ENCODE measurements at regions of chr5 and their contacts with region 1.

Region 1: DNA sequence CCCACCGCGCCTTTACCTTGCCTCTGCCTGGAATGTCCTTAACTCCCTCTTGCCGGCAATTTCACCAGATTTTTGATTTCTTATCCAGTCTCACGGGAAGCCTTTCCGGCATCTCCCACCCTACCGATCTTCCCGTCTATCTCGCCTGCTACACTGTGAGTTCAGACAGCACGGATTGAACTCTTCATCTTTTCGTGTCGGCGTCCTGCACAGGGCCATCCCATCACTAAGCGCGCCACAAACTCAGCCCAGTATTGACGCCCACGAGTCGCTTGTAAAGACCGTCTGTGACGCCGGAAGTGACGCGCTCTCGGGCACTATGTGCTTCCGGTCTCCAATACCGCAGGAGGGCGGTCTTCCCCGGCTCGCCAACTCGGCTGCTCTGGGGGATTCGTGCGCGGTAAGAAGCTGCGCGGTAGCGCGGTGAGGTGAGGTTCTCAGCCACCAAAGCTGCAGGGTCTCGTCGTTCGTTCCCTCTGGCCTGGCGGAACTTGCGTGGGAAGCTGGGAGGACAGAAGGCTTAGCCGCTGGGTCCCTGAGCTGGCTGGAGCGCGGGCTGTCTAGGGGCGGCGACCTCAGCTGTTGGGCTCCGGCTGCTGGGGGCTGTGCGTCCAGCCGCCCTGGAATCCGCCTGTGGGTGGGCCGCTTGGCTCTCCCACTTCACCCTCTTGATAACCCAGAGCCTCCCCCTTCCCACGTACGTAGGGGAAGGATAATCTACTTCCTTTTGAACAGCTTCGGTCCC is at the start of gene ZCCHC9:
- DNase-seq: peak; percentile 96
- H3K4me3 Mint-ChIP-seq: peak within 1 kb of the TSS; percentile 92
- H3K27ac Mint-ChIP-seq: peak within 1 kb of the TSS; percentile 92
- H3K4me1 Mint-ChIP-seq: peaks cover 61% of the 10 kb centered on the region
- H3K27me3 Mint-ChIP-seq: no peaks in the 10 kb centered on the region
- total RNA-seq, gene ZCCHC9: 42.6 to 49.1 TPM

Region 2: GRCh38 chr5:80654391-80655230 is 646.8 kb before region 1 on chr5 and contains the starts of genes DHFR and MSH3:
- CTCF ChIA-PET with region 1: no interaction called
- POLR2A ChIA-PET with region 1: interaction called, 3 read pairs
- intact Hi-C with region 1: loop called (anchors 1 kb)
- DNase-seq: peak; percentile 95
- H3K4me3 Mint-ChIP-seq: peak within 1 kb of the TSS; percentile 82
- H3K27ac Mint-ChIP-seq: peak within 1 kb of the TSS; percentile 93
- H3K4me1 Mint-ChIP-seq: peaks cover 20% of the 10 kb centered on the region
- H3K27me3 Mint-ChIP-seq: no peaks in the 10 kb centered on the region
- total RNA-seq, gene DHFR: 108 to 110 TPM
- total RNA-seq, gene MSH3: 23.2 to 23.6 TPM

Region 3: DNA sequence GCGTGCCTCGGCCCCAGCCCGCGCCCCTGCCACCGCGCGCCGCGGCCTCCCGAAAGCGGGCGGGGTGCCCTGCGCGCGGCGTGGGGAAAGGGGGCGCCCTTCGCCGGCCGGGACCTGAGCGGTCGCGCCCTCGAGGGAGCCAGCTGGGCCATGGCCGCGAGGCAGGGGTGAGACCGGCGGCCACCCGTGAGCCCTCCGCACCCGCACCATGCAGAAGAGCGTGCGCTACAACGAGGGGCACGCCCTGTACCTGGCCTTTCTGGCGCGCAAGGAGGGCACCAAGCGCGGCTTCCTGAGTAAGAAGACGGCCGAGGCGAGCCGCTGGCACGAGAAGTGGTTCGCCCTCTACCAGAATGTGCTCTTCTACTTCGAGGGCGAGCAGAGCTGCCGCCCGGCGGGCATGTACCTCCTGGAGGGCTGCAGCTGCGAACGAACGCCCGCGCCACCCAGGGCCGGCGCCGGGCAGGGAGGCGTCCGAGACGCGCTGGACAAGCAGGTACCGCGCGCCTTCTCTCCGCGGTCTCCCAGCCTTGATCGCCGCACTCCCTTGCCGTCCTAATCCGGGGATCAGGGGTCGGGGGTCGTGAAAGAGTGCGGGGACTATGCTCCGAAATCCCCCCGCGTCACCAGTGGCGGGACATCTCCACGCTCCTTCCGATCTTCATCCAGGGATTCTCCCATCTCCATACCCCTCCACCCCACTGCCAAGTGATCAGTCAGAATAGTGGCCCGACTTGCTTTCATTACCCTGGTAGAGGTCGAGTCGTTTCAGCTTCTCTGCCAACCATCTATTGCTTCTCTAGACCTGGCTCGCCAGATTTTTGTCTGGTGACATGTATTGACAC is 340.7 kb before region 1 on chr5:
- CTCF ChIA-PET with region 1: interaction called, 4 read pairs
- POLR2A ChIA-PET with region 1: no interaction called
- intact Hi-C with region 1: loop called (anchors 5 kb)
- DNase-seq: peak; percentile 60
- H3K4me3 Mint-ChIP-seq: peak overlapping the region; percentile 81
- H3K27ac Mint-ChIP-seq: peak overlapping the region; percentile 56
- H3K4me1 Mint-ChIP-seq: peaks cover 55% of the 10 kb centered on the region
- H3K27me3 Mint-ChIP-seq: peaks cover 6% of the 10 kb centered on the region

Region 4: GRCh38 chr5:81177061-81177460 is 124.4 kb before region 1 on chr5:
- CTCF ChIA-PET with region 1: no interaction called
- POLR2A ChIA-PET with region 1: no interaction called
- intact Hi-C with region 1: no loop called
- DNase-seq: no peak
- H3K4me3 Mint-ChIP-seq: no peak overlapping the region
- H3K27ac Mint-ChIP-seq: no peak overlapping the region
- H3K4me1 Mint-ChIP-seq: no peaks in the 10 kb centered on the region
- H3K27me3 Mint-ChIP-seq: no peaks in the 10 kb centered on the region

Region 5: GRCh38 chr5:81288021-81288433 is 13.4 kb before region 1 on chr5:
- CTCF ChIA-PET with region 1: interaction called, 13 read pairs
- POLR2A ChIA-PET with region 1: interaction called, 9 read pairs
- intact Hi-C with region 1: loop called (anchors 1 kb)
- DNase-seq: no peak
- H3K4me3 Mint-ChIP-seq: no peak overlapping the region
- H3K27ac Mint-ChIP-seq: no peak overlapping the region
- H3K4me1 Mint-ChIP-seq: peaks cover 54% of the 10 kb centered on the region
- H3K27me3 Mint-ChIP-seq: no peaks in the 10 kb centered on the region

Region 6: DNA sequence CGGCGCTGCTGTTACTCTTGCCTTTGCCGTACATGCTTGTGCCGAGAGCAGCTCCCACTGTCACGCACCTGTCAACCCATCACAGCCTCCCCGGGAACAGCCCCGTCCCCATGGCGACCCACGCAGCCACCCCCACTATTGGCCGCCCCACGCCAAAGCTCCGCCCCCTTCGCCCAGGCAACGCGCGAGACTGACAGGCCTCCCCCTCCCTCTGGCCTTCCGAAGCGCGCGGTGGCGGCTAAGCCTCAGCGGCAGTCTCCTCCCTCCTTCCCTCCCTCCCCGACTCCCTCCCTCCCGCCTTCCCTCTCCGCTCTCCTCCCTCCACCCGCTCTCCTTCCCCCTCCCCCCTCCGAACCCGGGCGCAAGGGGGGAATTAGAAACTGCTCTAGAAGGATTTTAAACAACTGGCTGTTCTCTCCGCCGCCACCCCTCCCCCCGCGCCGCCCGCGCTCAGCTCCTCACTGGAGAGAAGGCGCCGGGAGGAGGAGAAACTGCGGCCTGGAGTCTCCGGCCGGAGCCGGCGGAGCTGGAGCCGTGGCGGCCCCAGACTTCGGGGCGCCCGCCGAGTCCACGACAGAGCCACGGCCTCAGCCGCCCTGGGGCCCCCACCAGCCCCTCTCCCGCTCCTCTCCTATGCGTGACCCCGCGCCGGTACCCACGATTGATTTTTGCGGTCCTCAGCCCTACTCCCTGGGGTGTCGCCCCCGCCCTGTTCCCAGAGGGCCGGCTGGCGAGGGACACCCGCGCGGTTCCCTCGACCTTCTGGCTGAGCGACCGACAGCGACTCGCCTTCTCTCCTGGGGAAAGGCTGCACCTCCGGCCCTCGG is 449.8 kb after region 1 on chr5 and contains the start of gene SSBP2:
- CTCF ChIA-PET with region 1: no interaction called
- POLR2A ChIA-PET with region 1: no interaction called
- intact Hi-C with region 1: loop called (anchors 2 kb)
- DNase-seq: peak; percentile 98
- H3K4me3 Mint-ChIP-seq: peak within 1 kb of the TSS; percentile 86
- H3K27ac Mint-ChIP-seq: peak within 1 kb of the TSS; percentile 74
- H3K4me1 Mint-ChIP-seq: peaks cover 22% of the 10 kb centered on the region
- H3K27me3 Mint-ChIP-seq: no peaks in the 10 kb centered on the region
- total RNA-seq, gene SSBP2: 13.0 to 14.2 TPM

Region 7: GRCh38 chr5:81971712-81972495 is 670.5 kb after region 1 on chr5 and contains the start of gene ATG10:
- CTCF ChIA-PET with region 1: no interaction called
- POLR2A ChIA-PET with region 1: no interaction called
- intact Hi-C with region 1: loop called (anchors 1 kb)
- DNase-seq: peak; percentile 91
- H3K4me3 Mint-ChIP-seq: peak within 1 kb of the TSS; percentile 87
- H3K27ac Mint-ChIP-seq: peak within 1 kb of the TSS; percentile 98
- H3K4me1 Mint-ChIP-seq: peaks cover 20% of the 10 kb centered on the region
- H3K27me3 Mint-ChIP-seq: no peaks in the 10 kb centered on the region
- total RNA-seq, gene ATG10: 8.5 to 9.7 TPM

Region 8: DNA sequence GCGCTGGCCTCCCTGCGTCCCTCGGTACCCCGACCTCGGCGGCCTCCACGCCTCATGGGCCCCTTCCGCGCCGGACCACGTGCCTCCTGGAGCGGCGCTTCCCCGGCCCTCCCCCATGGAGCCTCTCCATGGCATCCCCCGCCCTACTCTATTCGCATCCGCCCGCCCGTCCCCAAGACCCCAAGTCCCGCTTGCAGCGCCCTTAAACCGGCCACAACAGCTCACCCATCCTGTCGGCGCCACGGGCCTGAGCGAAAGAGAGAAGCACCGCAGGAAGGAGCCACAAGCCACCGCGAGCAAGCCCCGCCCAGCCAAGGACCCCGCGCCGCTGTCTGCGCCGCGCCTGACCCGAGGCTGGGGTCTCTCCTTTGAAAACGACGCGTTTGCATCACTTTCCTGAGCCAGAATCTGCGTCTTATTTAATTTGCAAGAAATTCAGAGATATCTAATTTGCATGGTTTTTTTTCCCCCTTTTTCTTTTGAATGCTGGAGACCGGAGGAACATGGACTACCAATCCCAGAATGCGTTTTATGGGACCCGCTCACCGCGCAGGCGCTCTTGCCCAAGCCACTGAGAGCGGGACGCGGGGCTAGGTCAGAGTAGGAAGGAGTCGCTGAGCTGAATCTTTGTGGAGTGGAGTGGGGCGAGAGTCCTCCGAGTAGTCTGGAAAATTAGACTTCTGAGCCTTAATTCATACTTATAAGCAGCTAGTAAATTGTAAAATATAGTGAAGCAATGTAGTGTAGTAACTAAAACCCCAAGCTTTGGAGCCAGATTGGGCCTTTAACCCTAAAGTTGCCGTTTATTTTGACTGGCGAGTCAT is 976.9 kb after region 1 on chr5 and contains the start of gene RPS23:
- CTCF ChIA-PET with region 1: no interaction called
- POLR2A ChIA-PET with region 1: no interaction called
- intact Hi-C with region 1: loop called (anchors 2 kb)
- DNase-seq: peak; percentile 92
- H3K4me3 Mint-ChIP-seq: peak within 1 kb of the TSS; percentile 86
- H3K27ac Mint-ChIP-seq: peak within 1 kb of the TSS; percentile 97
- H3K4me1 Mint-ChIP-seq: peaks cover 50% of the 10 kb centered on the region
- H3K27me3 Mint-ChIP-seq: no peaks in the 10 kb centered on the region
- total RNA-seq, gene RPS23: 2,621 to 2,722 TPM